CD8-positive, alpha-beta T cell (primary cell): ENCODE measurements at regions of chr11 and their contacts with region 1.

Region 1: GRCh38 chr11:28981381-28981780 is 873.2 kb downstream of the METTL15 start:
- DNase-seq: no peak
- ATAC-seq: no peak
- H3K4me3 ChIP-seq: no peak overlapping the region
- H3K4me3 Mint-ChIP-seq: no peak overlapping the region
- H3K27ac ChIP-seq: no peak overlapping the region
- H3K27ac Mint-ChIP-seq: no peak overlapping the region
- H3K4me1 ChIP-seq: no peaks in the 10 kb centered on the region
- H3K4me1 Mint-ChIP-seq: no peaks in the 10 kb centered on the region
- H3K27me3 ChIP-seq: no peaks in the 10 kb centered on the region
- H3K27me3 Mint-ChIP-seq: no peaks in the 10 kb centered on the region
- CTCF ChIP-seq: no peak

Region 2: DNA sequence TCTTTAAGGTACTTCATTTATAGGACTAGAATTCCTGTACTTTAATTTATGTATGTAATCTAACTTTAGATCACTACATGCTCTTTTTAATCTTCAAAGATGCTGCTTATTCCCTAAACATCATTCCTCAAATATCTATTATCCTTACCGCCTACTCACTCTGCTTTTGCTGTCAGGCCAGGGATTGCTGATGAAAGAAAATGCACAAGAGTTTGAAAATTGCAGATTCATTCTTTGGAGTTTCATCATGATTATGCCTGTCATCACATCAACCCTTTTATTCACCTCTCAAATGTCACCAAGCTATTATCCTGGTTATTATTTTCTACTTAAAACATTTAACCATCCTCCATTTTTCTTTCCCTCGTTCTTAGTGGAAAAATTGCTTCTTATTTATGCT is 70.5 kb before region 1 on chr11:
- CTCF ChIA-PET with region 1: no interaction called
- POLR2A ChIA-PET with region 1: no interaction called
- intact Hi-C with region 1: no loop called
- DNase-seq: no peak
- ATAC-seq: no peak
- H3K4me3 ChIP-seq: no peak overlapping the region
- H3K4me3 Mint-ChIP-seq: no peak overlapping the region
- H3K27ac ChIP-seq: no peak overlapping the region
- H3K27ac Mint-ChIP-seq: no peak overlapping the region
- H3K4me1 ChIP-seq: no peaks in the 10 kb centered on the region
- H3K4me1 Mint-ChIP-seq: no peaks in the 10 kb centered on the region
- H3K27me3 ChIP-seq: no peaks in the 10 kb centered on the region
- H3K27me3 Mint-ChIP-seq: no peaks in the 10 kb centered on the region
- CTCF ChIP-seq: no peak

Region 3: GRCh38 chr11:28992996-28993395 is 11.6 kb after region 1 on chr11:
- CTCF ChIA-PET with region 1: no interaction called
- POLR2A ChIA-PET with region 1: no interaction called
- intact Hi-C with region 1: loop called (anchors 1 kb)
- DNase-seq: no peak
- ATAC-seq: no peak
- H3K4me3 ChIP-seq: no peak overlapping the region
- H3K4me3 Mint-ChIP-seq: no peak overlapping the region
- H3K27ac ChIP-seq: no peak overlapping the region
- H3K27ac Mint-ChIP-seq: no peak overlapping the region
- H3K4me1 ChIP-seq: no peaks in the 10 kb centered on the region
- H3K4me1 Mint-ChIP-seq: no peaks in the 10 kb centered on the region
- H3K27me3 ChIP-seq: no peaks in the 10 kb centered on the region
- H3K27me3 Mint-ChIP-seq: no peaks in the 10 kb centered on the region
- CTCF ChIP-seq: no peak

Region 4: GRCh38 chr11:29040491-29040890 is 59.1 kb after region 1 on chr11:
- CTCF ChIA-PET with region 1: no interaction called
- POLR2A ChIA-PET with region 1: no interaction called
- intact Hi-C with region 1: no loop called
- DNase-seq: no peak
- ATAC-seq: no peak
- H3K4me3 ChIP-seq: no peak overlapping the region
- H3K4me3 Mint-ChIP-seq: no peak overlapping the region
- H3K27ac ChIP-seq: no peak overlapping the region
- H3K27ac Mint-ChIP-seq: no peak overlapping the region
- H3K4me1 ChIP-seq: no peaks in the 10 kb centered on the region
- H3K4me1 Mint-ChIP-seq: no peaks in the 10 kb centered on the region
- H3K27me3 ChIP-seq: no peaks in the 10 kb centered on the region
- H3K27me3 Mint-ChIP-seq: no peaks in the 10 kb centered on the region
- CTCF ChIP-seq: no peak

Region 5: DNA sequence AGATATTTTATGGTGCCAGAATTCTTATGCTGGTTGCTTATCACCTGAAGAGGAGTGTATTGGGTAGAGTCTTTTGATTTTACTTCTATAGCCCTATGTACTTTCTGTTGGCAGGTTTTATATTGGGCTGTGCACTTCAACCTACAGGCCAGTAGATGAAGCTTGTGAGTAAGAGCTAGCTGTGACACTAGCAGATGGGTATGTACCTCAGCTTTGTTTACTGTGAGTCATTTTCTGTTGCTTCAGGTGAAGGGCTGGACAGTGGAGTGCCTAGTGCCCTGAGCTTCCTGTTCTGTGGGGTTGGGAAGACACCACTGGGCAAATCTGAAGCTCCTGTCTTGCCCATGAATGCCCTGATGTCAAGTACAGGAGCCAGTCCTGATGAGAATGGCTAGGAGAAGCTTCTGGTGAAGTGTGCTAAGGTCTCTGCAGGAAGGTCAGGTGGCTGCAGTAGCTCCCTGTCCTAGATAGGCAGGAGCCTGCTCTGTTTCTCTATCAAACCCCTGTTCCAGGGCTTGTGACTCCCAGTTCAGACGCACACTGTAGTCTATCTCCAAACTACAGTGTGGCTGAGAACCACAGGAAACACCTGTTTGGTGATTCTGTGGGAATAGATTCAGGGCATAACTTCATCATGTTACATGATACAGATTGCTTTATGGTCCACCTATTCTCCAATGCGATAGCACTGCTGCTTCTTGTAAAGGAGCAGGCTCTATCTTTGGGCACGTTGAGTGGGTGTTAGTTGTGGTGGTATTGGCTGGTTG is 279.7 kb after region 1 on chr11:
- CTCF ChIA-PET with region 1: no interaction called
- POLR2A ChIA-PET with region 1: no interaction called
- intact Hi-C with region 1: no loop called
- DNase-seq: no peak
- ATAC-seq: no peak
- H3K4me3 ChIP-seq: no peak overlapping the region
- H3K4me3 Mint-ChIP-seq: no peak overlapping the region
- H3K27ac ChIP-seq: no peak overlapping the region
- H3K27ac Mint-ChIP-seq: no peak overlapping the region
- H3K4me1 ChIP-seq: no peaks in the 10 kb centered on the region
- H3K4me1 Mint-ChIP-seq: no peaks in the 10 kb centered on the region
- H3K27me3 ChIP-seq: no peaks in the 10 kb centered on the region
- H3K27me3 Mint-ChIP-seq: no peaks in the 10 kb centered on the region
- CTCF ChIP-seq: no peak